ENCODE measurements at regions of chr1 and their contacts with region 1.

Region 1: GRCh38 chr1:150629115-150629928 is at the start of gene ENSA:
- DNase-seq: peak; percentile 85 to 99 (median 98)
- ATAC-seq: peak; percentile 91
- H3K4me3 ChIP-seq: peak within 1 kb of the TSS; percentile 88
- H3K4me3 Mint-ChIP-seq: no peak within 1 kb of the TSS
- H3K27ac ChIP-seq: peak within 1 kb of the TSS; percentile 98
- H3K27ac Mint-ChIP-seq: peak within 1 kb of the TSS in 2 of 9 donors; percentile 4 to 71
- H3K4me1 ChIP-seq: peaks cover 15 to 18% of the 10 kb centered on the region in 2 donors
- H3K4me1 Mint-ChIP-seq: peaks cover 0 to 40% (median 17%) of the 10 kb centered on the region in 7 donors
- H3K27me3 ChIP-seq: no peaks in the 10 kb centered on the region
- H3K27me3 Mint-ChIP-seq: no peaks in the 10 kb centered on the region
- total RNA-seq, gene ENSA: 97.2 to 178 (median 157) TPM

Region 2: GRCh38 chr1:150321826-150322166 is 307.5 kb before region 1 on chr1:
- CTCF ChIA-PET with region 1: no interaction called
- POLR2A ChIA-PET with region 1: no interaction called
- intact Hi-C with region 1: loop called in 1 of 2 experiments (anchors 1 kb)
- DNase-seq: peak in 5 of 9 donors; percentile 3 to 21 (median 14)
- ATAC-seq: peak; percentile 9
- H3K4me3 ChIP-seq: peak overlapping the region; percentile 97
- H3K4me3 Mint-ChIP-seq: peak overlapping the region; percentile 95 to 100 (median 99)
- H3K27ac ChIP-seq: peak overlapping the region; percentile 76
- H3K27ac Mint-ChIP-seq: peak overlapping the region; percentile 95 to 100 (median 99)
- H3K4me1 ChIP-seq: peaks cover 14 to 16% of the 10 kb centered on the region in 2 donors
- H3K4me1 Mint-ChIP-seq: peaks cover 10 to 54% (median 41%) of the 10 kb centered on the region in 7 donors
- H3K27me3 ChIP-seq: no peaks in the 10 kb centered on the region
- H3K27me3 Mint-ChIP-seq: peaks cover 0 to 2% (median 0%) of the 10 kb centered on the region in 5 donors

Region 3: GRCh38 chr1:150567717-150568593 is 61.4 kb before region 1 on chr1:
- CTCF ChIA-PET with region 1: interaction called, 272 read pairs
- POLR2A ChIA-PET with region 1: interaction called, 254 read pairs
- intact Hi-C with region 1: loop called in 1 of 2 experiments (anchors 1 kb)
- DNase-seq: peak in 5 of 9 donors; percentile 49 to 70 (median 62)
- ATAC-seq: peak; percentile 5
- H3K4me3 ChIP-seq: peak overlapping the region; percentile 73
- H3K4me3 Mint-ChIP-seq: peak overlapping the region; percentile 84 to 95 (median 90)
- H3K27ac ChIP-seq: peak overlapping the region; percentile 97
- H3K27ac Mint-ChIP-seq: peak overlapping the region; percentile 96 to 100 (median 97)
- H3K4me1 ChIP-seq: peaks cover 92 to 96% of the 10 kb centered on the region in 2 donors
- H3K4me1 Mint-ChIP-seq: peaks cover 41 to 95% (median 85%) of the 10 kb centered on the region in 7 donors
- H3K27me3 ChIP-seq: no peaks in the 10 kb centered on the region
- H3K27me3 Mint-ChIP-seq: no peaks in the 10 kb centered on the region

Region 4: DNA sequence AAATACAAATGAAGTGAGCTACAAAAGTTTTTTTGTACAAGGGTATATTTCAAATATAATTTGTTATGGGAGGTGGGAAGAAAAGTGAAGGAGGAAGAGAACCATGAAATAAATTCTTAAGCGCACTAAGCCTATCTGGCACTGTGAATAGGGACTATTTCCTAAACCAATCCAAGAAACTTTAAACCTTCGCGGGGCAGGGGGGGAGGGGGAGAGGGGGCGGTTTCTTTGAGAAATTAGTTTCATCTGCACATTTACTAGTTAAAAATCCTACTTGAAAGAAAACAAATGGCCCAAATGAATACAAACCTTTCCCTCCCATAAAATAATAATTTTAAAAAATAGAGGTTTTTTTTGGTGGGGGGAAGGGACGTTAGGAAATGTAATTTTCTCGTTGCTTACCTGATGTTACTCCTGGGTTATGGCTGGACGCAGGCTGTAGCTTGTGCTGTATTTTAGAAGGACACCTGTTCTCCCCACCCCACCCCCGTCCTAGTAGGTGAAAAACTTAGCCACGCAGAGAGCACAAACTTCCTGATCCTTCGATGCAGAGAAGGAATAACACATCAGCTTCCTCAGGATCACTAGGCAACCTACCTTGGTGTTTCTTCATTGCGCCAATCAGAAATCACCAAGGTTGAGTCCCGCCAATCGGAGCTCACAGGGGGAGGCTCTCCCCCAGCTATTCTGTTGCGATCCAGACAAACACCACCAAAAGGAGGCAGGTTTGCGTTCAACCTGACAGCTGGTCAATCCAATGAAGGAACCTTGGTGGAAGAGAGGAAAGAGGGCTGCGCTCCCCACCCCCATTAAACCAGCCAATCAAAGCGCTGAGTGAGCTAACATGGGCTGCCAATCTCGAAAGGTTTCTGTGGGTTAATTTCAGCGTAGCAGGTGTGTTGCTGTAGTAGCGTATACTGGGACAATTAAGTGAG is 67.5 kb after region 1 on chr1 and contains the start of gene GOLPH3L:
- CTCF ChIA-PET with region 1: no interaction called
- POLR2A ChIA-PET with region 1: interaction called, 7 read pairs
- intact Hi-C with region 1: loop called (anchors 1 kb)
- DNase-seq: peak; percentile 46 to 95 (median 92)
- ATAC-seq: peak; percentile 100
- H3K4me3 ChIP-seq: peak within 1 kb of the TSS; percentile 73
- H3K4me3 Mint-ChIP-seq: peak within 1 kb of the TSS; percentile 91 to 100 (median 98)
- H3K27ac ChIP-seq: peak within 1 kb of the TSS; percentile 82
- H3K27ac Mint-ChIP-seq: peak within 1 kb of the TSS; percentile 81 to 99 (median 95)
- H3K4me1 ChIP-seq: peaks cover 4 to 11% of the 10 kb centered on the region in 2 donors
- H3K4me1 Mint-ChIP-seq: peaks cover 13 to 49% (median 42%) of the 10 kb centered on the region in 7 donors
- H3K27me3 ChIP-seq: no peaks in the 10 kb centered on the region
- H3K27me3 Mint-ChIP-seq: peaks cover 0 to 12% (median 0%) of the 10 kb centered on the region in 5 donors
- total RNA-seq, gene GOLPH3L: 8.7 to 32.1 (median 23.6) TPM

Region 5: DNA sequence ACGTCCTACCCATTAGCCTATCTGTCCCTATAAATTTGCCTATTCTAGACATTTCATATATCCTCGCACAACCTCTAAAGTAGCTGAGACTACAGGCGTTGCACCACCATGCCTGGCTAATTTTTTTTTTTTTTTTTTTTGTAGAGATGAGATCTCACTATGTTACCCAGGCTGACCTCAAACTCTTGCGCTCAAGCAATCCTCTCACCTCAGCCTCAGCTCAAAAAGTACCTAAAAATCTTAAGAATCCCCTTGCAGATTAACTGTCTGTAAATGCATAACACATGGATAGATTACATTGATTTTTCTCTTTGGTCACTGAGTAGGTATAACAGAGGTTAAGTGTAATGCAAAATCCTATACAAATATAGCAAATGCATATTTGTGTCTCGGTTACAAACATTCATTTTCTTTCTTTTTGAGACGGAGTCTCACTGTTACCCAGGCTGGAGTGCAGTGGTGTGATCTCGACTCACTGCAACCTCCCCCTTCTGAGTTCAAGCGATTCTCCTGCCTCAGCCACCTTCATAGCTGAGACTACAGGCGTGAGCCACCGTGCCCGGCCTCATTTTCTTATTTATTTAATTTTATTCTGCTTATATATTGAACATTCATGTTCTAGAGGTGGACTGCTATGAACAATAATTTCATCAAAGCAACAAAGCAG is 89.0 kb after region 1 on chr1:
- CTCF ChIA-PET with region 1: no interaction called
- POLR2A ChIA-PET with region 1: no interaction called
- intact Hi-C with region 1: no loop called
- DNase-seq: no peak
- ATAC-seq: no peak
- H3K4me3 ChIP-seq: no peak overlapping the region
- H3K4me3 Mint-ChIP-seq: no peak overlapping the region
- H3K27ac ChIP-seq: no peak overlapping the region
- H3K27ac Mint-ChIP-seq: no peak overlapping the region
- H3K4me1 ChIP-seq: no peaks in the 10 kb centered on the region
- H3K4me1 Mint-ChIP-seq: no peaks in the 10 kb centered on the region
- H3K27me3 ChIP-seq: no peaks in the 10 kb centered on the region
- H3K27me3 Mint-ChIP-seq: peaks cover 0 to 9% (median 0%) of the 10 kb centered on the region in 5 donors

Region 6: GRCh38 chr1:150979092-150980056 is 350.1 kb after region 1 on chr1:
- CTCF ChIA-PET with region 1: no interaction called
- POLR2A ChIA-PET with region 1: no interaction called
- intact Hi-C with region 1: loop called (anchors 1 to 2 kb)
- DNase-seq: peak; percentile 68 to 93 (median 84)
- ATAC-seq: peak; percentile 81
- H3K4me3 ChIP-seq: peak overlapping the region; percentile 39
- H3K4me3 Mint-ChIP-seq: peak overlapping the region in 9 of 10 donors; percentile 39 to 73 (median 61)
- H3K27ac ChIP-seq: peak overlapping the region; percentile 67
- H3K27ac Mint-ChIP-seq: peak overlapping the region; percentile 9 to 83 (median 62)
- H3K4me1 ChIP-seq: peaks cover 24 to 34% of the 10 kb centered on the region in 2 donors
- H3K4me1 Mint-ChIP-seq: peaks cover 14 to 44% (median 37%) of the 10 kb centered on the region in 7 donors
- H3K27me3 ChIP-seq: no peaks in the 10 kb centered on the region
- H3K27me3 Mint-ChIP-seq: no peaks in the 10 kb centered on the region

Region 7: DNA sequence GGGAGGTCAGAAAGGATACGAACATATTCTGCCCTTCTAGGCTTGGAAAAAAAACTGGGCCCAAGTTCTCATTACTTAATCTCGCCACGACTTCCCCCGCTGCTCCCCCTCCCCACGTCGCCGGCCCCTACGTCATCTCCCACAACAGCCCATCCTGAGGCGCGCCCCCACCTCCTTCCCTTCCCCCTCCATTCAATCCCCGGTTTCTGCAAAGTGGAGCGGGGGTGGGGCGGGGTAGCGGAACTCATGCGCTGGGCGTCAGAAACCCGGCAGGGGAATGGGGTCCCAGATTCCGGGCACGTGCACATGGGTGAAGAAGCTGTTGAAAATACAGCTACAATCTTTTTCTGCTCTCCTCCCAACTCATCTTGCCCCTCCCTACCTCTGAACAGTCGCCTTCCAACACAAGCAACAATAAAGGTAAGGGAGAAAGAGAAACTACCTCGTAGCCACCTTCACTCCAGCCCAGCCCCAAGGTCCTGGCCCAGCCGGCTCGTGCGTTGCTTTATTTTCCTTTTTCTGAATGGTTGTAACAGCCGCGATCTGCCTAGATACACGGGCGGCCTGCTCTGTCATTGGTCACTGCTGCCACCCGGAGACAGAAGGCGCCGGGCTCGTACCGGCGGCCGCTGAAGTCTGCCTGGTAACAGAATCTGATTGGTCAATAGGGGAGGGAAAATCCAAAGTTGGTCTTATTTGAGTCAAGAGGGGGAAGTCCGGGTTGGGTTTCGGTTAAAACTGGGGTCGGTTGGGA is 717.6 kb after region 1 on chr1 and contains the start of gene RFX5:
- CTCF ChIA-PET with region 1: no interaction called
- POLR2A ChIA-PET with region 1: no interaction called
- intact Hi-C with region 1: loop called in 1 of 2 experiments (anchors 1 kb)
- DNase-seq: peak; percentile 73 to 98 (median 94)
- ATAC-seq: peak; percentile 95
- H3K4me3 ChIP-seq: peak within 1 kb of the TSS; percentile 75
- H3K4me3 Mint-ChIP-seq: peak within 1 kb of the TSS; percentile 85 to 98 (median 95)
- H3K27ac ChIP-seq: peak within 1 kb of the TSS; percentile 96
- H3K27ac Mint-ChIP-seq: peak within 1 kb of the TSS; percentile 95 to 100 (median 99)
- H3K4me1 ChIP-seq: peaks cover 13 to 16% of the 10 kb centered on the region in 2 donors
- H3K4me1 Mint-ChIP-seq: peaks cover 20 to 44% (median 39%) of the 10 kb centered on the region in 7 donors
- H3K27me3 ChIP-seq: no peaks in the 10 kb centered on the region
- H3K27me3 Mint-ChIP-seq: no peaks in the 10 kb centered on the region
- total RNA-seq, gene RFX5: 62.6 to 89.3 (median 82.2) TPM

Measured in naive thymus-derived CD4-positive, alpha-beta T cell (primary cell).